Activated CD4-positive, alpha-beta T cell treated with anti-CD3 and anti-CD28 coated beads for 36 hours (primary cell): ENCODE measurements at regions of chr2 and their contacts with region 1.

Region 1: DNA sequence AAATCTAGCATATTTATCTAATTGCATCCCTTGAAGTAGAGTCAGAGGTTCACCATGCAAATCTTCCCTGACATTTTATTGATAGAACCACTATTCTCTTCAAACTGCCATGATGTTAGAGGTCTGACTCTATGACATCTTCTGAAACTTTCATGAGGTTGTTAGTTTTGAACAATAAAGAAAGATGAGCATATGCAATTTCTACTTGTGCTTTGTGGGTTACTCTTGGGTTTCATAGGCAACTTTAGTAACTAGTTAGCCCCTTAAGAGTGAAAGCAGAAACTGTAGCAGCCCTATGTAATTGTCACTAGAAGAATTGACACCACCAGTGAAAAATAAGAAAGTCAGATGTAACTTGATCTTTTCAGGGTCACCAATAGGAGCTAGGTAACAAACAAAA is 53.1 kb upstream of the ZEB2 start:
- DNase-seq: no peak
- ATAC-seq: peak; percentile 75
- H3K4me3 Mint-ChIP-seq: no peak overlapping the region
- H3K27ac Mint-ChIP-seq: no peak overlapping the region
- H3K4me1 Mint-ChIP-seq: peaks cover 25% of the 10 kb centered on the region
- H3K27me3 Mint-ChIP-seq: peaks cover 11% of the 10 kb centered on the region

Region 2: GRCh38 chr2:144456680-144457079 is 116.3 kb before region 1 on chr2:
- CTCF ChIA-PET with region 1: no interaction called
- POLR2A ChIA-PET with region 1: no interaction called
- intact Hi-C with region 1: no loop called
- DNase-seq: peak; percentile 22
- ATAC-seq: peak; percentile 69
- H3K4me3 Mint-ChIP-seq: no peak overlapping the region
- H3K27ac Mint-ChIP-seq: no peak overlapping the region
- H3K4me1 Mint-ChIP-seq: peaks cover 53% of the 10 kb centered on the region
- H3K27me3 Mint-ChIP-seq: peaks cover 21% of the 10 kb centered on the region

Region 3: GRCh38 chr2:144583741-144584453 is 10.9 kb after region 1 on chr2:
- CTCF ChIA-PET with region 1: no interaction called
- POLR2A ChIA-PET with region 1: interaction called, 3 read pairs
- intact Hi-C with region 1: loop called (anchors 1 kb)
- DNase-seq: peak; percentile 18
- ATAC-seq: peak; percentile 88
- H3K4me3 Mint-ChIP-seq: peak overlapping the region; percentile 1
- H3K27ac Mint-ChIP-seq: peak overlapping the region; percentile 77
- H3K4me1 Mint-ChIP-seq: peaks cover 22% of the 10 kb centered on the region
- H3K27me3 Mint-ChIP-seq: peaks cover 23% of the 10 kb centered on the region

Region 4: GRCh38 chr2:144703852-144704708 is 131.1 kb after region 1 on chr2:
- CTCF ChIA-PET with region 1: no interaction called
- POLR2A ChIA-PET with region 1: no interaction called
- intact Hi-C with region 1: no loop called
- DNase-seq: peak; percentile 8
- ATAC-seq: no peak
- H3K4me3 Mint-ChIP-seq: no peak overlapping the region
- H3K27ac Mint-ChIP-seq: no peak overlapping the region
- H3K4me1 Mint-ChIP-seq: no peaks in the 10 kb centered on the region
- H3K27me3 Mint-ChIP-seq: peaks cover 6% of the 10 kb centered on the region